Activated naive CD4-positive, alpha-beta T cell treated with anti-CD3 and anti-CD28 coated beads for 36 hours (primary cell): ENCODE measurements at regions of chr17 and their contacts with region 1.

Region 1: GRCh38 chr17:67390646-67391384 is 13.7 kb downstream of the PITPNC1 start:
- DNase-seq: peak; percentile 89
- H3K4me3 Mint-ChIP-seq: peak overlapping the region; percentile 62
- H3K27ac Mint-ChIP-seq: peak overlapping the region; percentile 99
- H3K4me1 Mint-ChIP-seq: peaks cover 88% of the 10 kb centered on the region
- H3K27me3 Mint-ChIP-seq: no peaks in the 10 kb centered on the region

Region 2: GRCh38 chr17:67366193-67367157 is 24.3 kb before region 1 on chr17 and contains the start of gene PSMD12:
- CTCF ChIA-PET with region 1: interaction called, 5 read pairs
- intact Hi-C with region 1: loop called (anchors 2 kb)
- DNase-seq: peak; percentile 95
- H3K4me3 Mint-ChIP-seq: peak within 1 kb of the TSS; percentile 90
- H3K27ac Mint-ChIP-seq: peak within 1 kb of the TSS; percentile 93
- H3K4me1 Mint-ChIP-seq: peaks cover 42% of the 10 kb centered on the region
- H3K27me3 Mint-ChIP-seq: no peaks in the 10 kb centered on the region
- total RNA-seq, gene PSMD12: 67.8 to 70.7 TPM

Region 3: GRCh38 chr17:67431249-67432048 is 40.6 kb after region 1 on chr17:
- CTCF ChIA-PET with region 1: interaction called, 11 read pairs
- intact Hi-C with region 1: loop called (anchors 1 kb)
- DNase-seq: peak; percentile 46
- H3K4me3 Mint-ChIP-seq: peak overlapping the region; percentile 25
- H3K27ac Mint-ChIP-seq: peak overlapping the region; percentile 95
- H3K4me1 Mint-ChIP-seq: peaks cover 76% of the 10 kb centered on the region
- H3K27me3 Mint-ChIP-seq: no peaks in the 10 kb centered on the region

Region 4: GRCh38 chr17:67452681-67453554 is 62.1 kb after region 1 on chr17:
- CTCF ChIA-PET with region 1: interaction called, 5 read pairs
- intact Hi-C with region 1: loop called (anchors 1 kb)
- DNase-seq: peak; percentile 65
- H3K4me3 Mint-ChIP-seq: peak overlapping the region; percentile 53
- H3K27ac Mint-ChIP-seq: peak overlapping the region; percentile 91
- H3K4me1 Mint-ChIP-seq: peaks cover 91% of the 10 kb centered on the region
- H3K27me3 Mint-ChIP-seq: no peaks in the 10 kb centered on the region

Region 5: GRCh38 chr17:67475236-67475937 is 84.6 kb after region 1 on chr17:
- CTCF ChIA-PET with region 1: interaction called, 167 read pairs
- intact Hi-C with region 1: loop called (anchors 1 kb)
- DNase-seq: peak; percentile 95
- H3K4me3 Mint-ChIP-seq: peak overlapping the region; percentile 60
- H3K27ac Mint-ChIP-seq: peak overlapping the region; percentile 99
- H3K4me1 Mint-ChIP-seq: peaks cover 60% of the 10 kb centered on the region
- H3K27me3 Mint-ChIP-seq: no peaks in the 10 kb centered on the region

Region 6: GRCh38 chr17:67559377-67559966 is 168.7 kb after region 1 on chr17:
- CTCF ChIA-PET with region 1: no interaction called
- intact Hi-C with region 1: no loop called
- DNase-seq: no peak
- H3K4me3 Mint-ChIP-seq: no peak overlapping the region
- H3K27ac Mint-ChIP-seq: no peak overlapping the region
- H3K4me1 Mint-ChIP-seq: peaks cover 4% of the 10 kb centered on the region
- H3K27me3 Mint-ChIP-seq: no peaks in the 10 kb centered on the region

Region 7: GRCh38 chr17:67602956-67603355 is 212.1 kb after region 1 on chr17:
- CTCF ChIA-PET with region 1: interaction called, 9 read pairs
- intact Hi-C with region 1: loop called (anchors 1 kb)
- DNase-seq: peak; percentile 72
- H3K4me3 Mint-ChIP-seq: no peak overlapping the region
- H3K27ac Mint-ChIP-seq: no peak overlapping the region
- H3K4me1 Mint-ChIP-seq: peaks cover 14% of the 10 kb centered on the region
- H3K27me3 Mint-ChIP-seq: no peaks in the 10 kb centered on the region